HCT116 (cell line): ENCODE measurements at regions of chr15 and their contacts with region 1.

Region 1: DNA sequence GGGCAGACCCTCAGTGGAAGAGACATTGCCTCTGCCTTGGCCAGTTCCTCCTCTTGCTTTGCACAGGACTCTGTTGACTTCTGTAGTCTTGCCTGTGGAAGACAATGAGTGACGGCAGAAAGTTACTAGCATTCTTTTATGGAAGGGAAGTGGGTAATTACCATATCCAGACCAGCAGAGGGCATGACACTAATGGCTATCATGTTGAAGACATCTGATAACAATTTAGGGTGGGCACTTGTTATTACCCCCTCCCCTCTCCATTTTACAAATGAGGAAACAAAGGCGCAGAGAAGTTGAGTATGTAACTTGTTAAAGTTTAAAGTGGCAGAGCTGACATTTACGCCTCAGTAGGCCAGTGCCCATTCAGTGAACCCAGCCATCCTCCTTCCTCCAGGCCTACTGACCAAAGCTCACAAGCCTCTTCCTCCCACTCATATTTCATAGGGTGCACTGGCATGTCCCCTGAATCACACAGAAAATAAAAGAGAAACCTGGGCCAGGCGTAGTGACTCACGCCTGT is 48.2 kb upstream of the FMN1 start:
- DNase-seq: no peak
- ATAC-seq: peak; percentile 74
- H3K4me3 ChIP-seq: no peak overlapping the region
- H3K27ac ChIP-seq: no peak overlapping the region
- H3K4me1 ChIP-seq: peaks cover 0 to 30% of the 10 kb centered on the region in 2 experiments; a peak in 3 of 4 replicates
- H3K27me3 ChIP-seq: peaks cover 3% of the 10 kb centered on the region; the same call in 1 of the 2 replicates
- CTCF ChIP-seq: peak; percentile 28 to 77 (median 66); a peak in 5 of 6 replicates
- POLR2A ChIP-seq: no peak
- RAD21 ChIP-seq: peak; percentile 50; the same call in 1 of the 2 replicates

Region 2: GRCh38 chr15:33007303-33007855 is 235.4 kb before region 1 on chr15:
- CTCF ChIA-PET with region 1: no interaction called
- POLR2A ChIA-PET with region 1: no interaction called
- RAD21 ChIA-PET with region 1: no interaction called
- intact Hi-C with region 1: no loop called
- DNase-seq: peak; percentile 35
- ATAC-seq: peak; percentile 94
- H3K4me3 ChIP-seq: no peak overlapping the region
- H3K27ac ChIP-seq: no peak overlapping the region
- H3K4me1 ChIP-seq: no peaks in the 10 kb centered on the region; a peak in 1 of 4 replicates
- H3K27me3 ChIP-seq: no peaks in the 10 kb centered on the region
- CTCF ChIP-seq: peak; percentile 9 to 40 (median 38); a peak in 4 of 6 replicates
- POLR2A ChIP-seq: no peak
- RAD21 ChIP-seq: peak; percentile 42; the same call in 1 of the 2 replicates

Region 3: DNA sequence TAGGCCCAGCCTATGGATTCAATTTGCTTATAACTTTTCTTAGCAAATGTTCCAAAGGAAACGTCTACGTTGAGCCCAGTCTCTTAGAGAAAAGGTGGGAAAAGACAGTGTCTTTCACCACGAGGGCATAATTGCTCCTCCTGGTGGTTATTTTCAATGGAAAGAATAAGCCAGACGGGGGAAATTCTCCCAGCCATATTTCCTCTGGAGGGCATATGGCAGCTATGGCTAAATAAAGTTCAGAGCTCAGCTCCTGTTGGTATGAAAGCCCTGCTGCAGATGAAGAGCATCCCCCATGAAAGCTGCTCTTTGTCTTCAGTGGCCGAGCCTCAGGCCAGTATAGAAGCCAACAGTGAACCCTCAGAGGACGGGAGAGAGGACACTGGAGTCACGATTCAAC is 366.0 kb after region 1 on chr15:
- CTCF ChIA-PET with region 1: no interaction called
- POLR2A ChIA-PET with region 1: interaction called, 3 read pairs
- RAD21 ChIA-PET with region 1: no interaction called
- intact Hi-C with region 1: loop called (anchors 2 kb)
- DNase-seq: no peak
- ATAC-seq: peak; percentile 36; the same call in 1 of the 2 replicates
- H3K4me3 ChIP-seq: no peak overlapping the region
- H3K27ac ChIP-seq: no peak overlapping the region
- H3K4me1 ChIP-seq: no peaks in the 10 kb centered on the region
- H3K27me3 ChIP-seq: peaks cover 44% of the 10 kb centered on the region
- CTCF ChIP-seq: peak; percentile 17 to 49 (median 23); a peak in 5 of 6 replicates
- POLR2A ChIP-seq: no peak
- RAD21 ChIP-seq: peak; percentile 28; the same call in 1 of the 2 replicates

Region 4: DNA sequence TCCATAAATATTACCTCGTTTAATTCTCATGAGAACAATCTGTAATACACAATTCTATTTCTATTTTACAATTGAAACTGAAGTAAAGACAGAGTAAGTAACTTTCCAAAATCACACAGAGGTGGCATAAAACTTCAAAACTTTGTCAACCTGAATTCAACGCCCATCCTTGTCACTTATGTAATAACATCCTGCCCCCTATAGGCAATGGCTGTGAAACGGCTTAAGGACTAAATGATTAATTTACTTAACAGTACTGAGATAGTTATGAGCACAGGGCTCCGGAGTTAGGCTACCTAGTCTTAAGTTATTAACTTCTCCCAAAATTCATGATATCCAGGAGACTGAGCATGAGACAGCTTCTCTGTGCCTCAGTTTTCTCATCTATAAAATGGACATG is 432.5 kb after region 1 on chr15:
- CTCF ChIA-PET with region 1: no interaction called
- POLR2A ChIA-PET with region 1: interaction called, 3 read pairs
- RAD21 ChIA-PET with region 1: no interaction called
- intact Hi-C with region 1: loop called (anchors 10 kb)
- DNase-seq: peak; percentile 26
- ATAC-seq: peak; percentile 70; the same call in 1 of the 2 replicates
- H3K4me3 ChIP-seq: no peak overlapping the region
- H3K27ac ChIP-seq: no peak overlapping the region
- H3K4me1 ChIP-seq: no peaks in the 10 kb centered on the region
- H3K27me3 ChIP-seq: peaks cover 85% of the 10 kb centered on the region
- CTCF ChIP-seq: peak; percentile 16 to 73 (median 62); a peak in 5 of 6 replicates
- POLR2A ChIP-seq: no peak
- RAD21 ChIP-seq: peak; percentile 46